Naive thymus-derived CD4-positive, alpha-beta T cell (primary cell): ENCODE measurements at regions of chr16 and their contacts with region 1.

Region 1: DNA sequence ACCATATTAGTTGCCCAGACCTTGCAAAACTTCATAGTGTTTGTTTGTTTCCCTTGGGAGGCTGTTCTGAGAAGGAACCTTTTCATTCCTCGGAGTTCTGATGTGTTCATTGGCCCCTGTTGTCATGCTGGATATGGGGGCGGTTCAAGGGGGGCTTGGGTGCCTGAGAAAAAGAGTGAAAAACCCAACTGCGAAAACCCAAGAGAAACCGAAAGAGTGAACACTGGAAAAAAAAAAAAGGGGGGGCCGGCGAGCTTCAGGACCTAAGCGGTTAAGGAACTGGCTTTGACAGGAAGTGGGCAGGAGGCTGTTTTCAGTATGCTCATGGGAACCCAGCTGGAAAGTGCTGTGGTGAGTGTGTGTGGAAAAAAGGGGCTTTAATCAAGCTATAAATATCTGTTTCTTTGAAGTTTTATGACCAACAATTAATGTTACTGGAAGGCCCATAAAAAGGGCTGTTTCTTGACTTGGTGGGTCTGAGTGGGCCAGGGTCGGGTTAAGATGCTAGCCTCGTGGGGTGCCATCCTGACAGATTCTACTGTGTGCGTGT is 510.7 kb downstream of the MAF start:
- DNase-seq: peak in 8 of 9 donors; percentile 14 to 67 (median 36)
- ATAC-seq: peak; percentile 52
- H3K4me3 ChIP-seq: peak overlapping the region; percentile 7
- H3K4me3 Mint-ChIP-seq: peak overlapping the region; percentile 76 to 85 (median 82)
- H3K27ac ChIP-seq: no peak overlapping the region
- H3K27ac Mint-ChIP-seq: peak overlapping the region; percentile 48 to 85 (median 80)
- H3K4me1 ChIP-seq: peaks cover 40 to 46% of the 10 kb centered on the region in 2 donors
- H3K4me1 Mint-ChIP-seq: peaks cover 35 to 69% (median 57%) of the 10 kb centered on the region in 7 donors
- H3K27me3 ChIP-seq: no peaks in the 10 kb centered on the region
- H3K27me3 Mint-ChIP-seq: peaks cover 0 to 6% (median 0%) of the 10 kb centered on the region in 5 donors

Region 2: GRCh38 chr16:78778101-78779004 is 311.5 kb before region 1 on chr16:
- CTCF ChIA-PET with region 1: no interaction called
- POLR2A ChIA-PET with region 1: no interaction called
- intact Hi-C with region 1: loop called in 1 of 2 experiments (anchors 1 kb)
- DNase-seq: peak in 1 of 9 donors; percentile 55
- ATAC-seq: no peak
- H3K4me3 ChIP-seq: no peak overlapping the region
- H3K4me3 Mint-ChIP-seq: peak overlapping the region in 1 of 10 donors; percentile 76
- H3K27ac ChIP-seq: no peak overlapping the region
- H3K27ac Mint-ChIP-seq: peak overlapping the region in 1 of 9 donors; percentile 94
- H3K4me1 ChIP-seq: no peaks in the 10 kb centered on the region
- H3K4me1 Mint-ChIP-seq: peaks cover 0 to 52% (median 0%) of the 10 kb centered on the region in 7 donors
- H3K27me3 ChIP-seq: no peaks in the 10 kb centered on the region
- H3K27me3 Mint-ChIP-seq: no peaks in the 10 kb centered on the region

Region 3: GRCh38 chr16:79071424-79071823 is 18.4 kb before region 1 on chr16:
- CTCF ChIA-PET with region 1: no interaction called
- POLR2A ChIA-PET with region 1: no interaction called
- intact Hi-C with region 1: loop called in 1 of 2 experiments (anchors 2 kb)
- DNase-seq: no peak
- ATAC-seq: no peak
- H3K4me3 ChIP-seq: no peak overlapping the region
- H3K4me3 Mint-ChIP-seq: no peak overlapping the region
- H3K27ac ChIP-seq: no peak overlapping the region
- H3K27ac Mint-ChIP-seq: no peak overlapping the region
- H3K4me1 ChIP-seq: no peaks in the 10 kb centered on the region
- H3K4me1 Mint-ChIP-seq: peaks cover 14 to 53% (median 44%) of the 10 kb centered on the region in 7 donors
- H3K27me3 ChIP-seq: no peaks in the 10 kb centered on the region
- H3K27me3 Mint-ChIP-seq: peaks cover 0 to 11% (median 1%) of the 10 kb centered on the region in 5 donors

Region 4: DNA sequence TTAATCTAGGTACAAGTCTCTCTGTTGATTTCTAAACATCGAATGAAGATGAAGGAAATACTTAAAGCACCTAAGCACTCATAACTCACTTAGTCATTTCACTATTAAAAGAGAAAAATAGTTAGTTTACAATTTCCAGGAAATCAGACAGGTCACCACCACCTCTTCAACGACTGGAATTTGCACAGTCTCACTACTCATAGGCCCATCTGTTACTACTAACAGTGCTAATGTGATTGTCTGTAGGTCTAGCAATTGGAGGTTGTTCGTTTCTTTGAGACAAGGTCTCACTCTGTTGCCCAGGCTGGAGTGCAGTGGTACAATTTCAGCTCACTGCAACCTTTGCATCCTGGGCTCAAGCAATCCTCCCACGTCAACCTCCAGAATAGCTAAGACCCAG is 66.1 kb after region 1 on chr16:
- CTCF ChIA-PET with region 1: interaction called, 3 read pairs
- POLR2A ChIA-PET with region 1: no interaction called
- intact Hi-C with region 1: loop called in 1 of 2 experiments (anchors 2 kb)
- DNase-seq: no peak
- ATAC-seq: no peak
- H3K4me3 ChIP-seq: no peak overlapping the region
- H3K4me3 Mint-ChIP-seq: no peak overlapping the region
- H3K27ac ChIP-seq: no peak overlapping the region
- H3K27ac Mint-ChIP-seq: no peak overlapping the region
- H3K4me1 ChIP-seq: no peaks in the 10 kb centered on the region
- H3K4me1 Mint-ChIP-seq: peaks cover 0 to 25% (median 13%) of the 10 kb centered on the region in 7 donors
- H3K27me3 ChIP-seq: no peaks in the 10 kb centered on the region
- H3K27me3 Mint-ChIP-seq: no peaks in the 10 kb centered on the region

Region 5: DNA sequence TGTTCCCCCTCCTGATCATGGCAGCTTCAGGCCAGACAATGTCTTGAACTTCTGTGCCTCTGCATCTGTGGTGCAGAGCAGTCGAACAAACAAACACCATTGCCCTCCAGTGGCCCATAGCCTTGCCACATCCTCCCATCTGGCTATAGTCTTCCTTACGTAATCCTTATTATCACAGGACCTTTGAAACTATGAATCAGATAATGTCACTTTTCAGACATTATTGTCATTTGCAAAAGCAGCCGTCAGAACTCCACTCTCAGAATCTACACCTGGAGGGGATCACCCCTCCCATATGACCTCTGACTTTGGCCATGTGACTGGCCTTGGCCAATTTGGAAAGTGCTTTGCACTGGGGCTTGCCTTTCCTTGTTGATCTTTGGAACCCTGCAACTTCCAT is 123.4 kb after region 1 on chr16:
- CTCF ChIA-PET with region 1: no interaction called
- POLR2A ChIA-PET with region 1: no interaction called
- intact Hi-C with region 1: loop called in 1 of 2 experiments (anchors 5 kb)
- DNase-seq: no peak
- ATAC-seq: no peak
- H3K4me3 ChIP-seq: no peak overlapping the region
- H3K4me3 Mint-ChIP-seq: no peak overlapping the region
- H3K27ac ChIP-seq: no peak overlapping the region
- H3K27ac Mint-ChIP-seq: no peak overlapping the region
- H3K4me1 ChIP-seq: peaks cover 3 to 13% of the 10 kb centered on the region in 2 donors
- H3K4me1 Mint-ChIP-seq: peaks cover 2 to 19% (median 10%) of the 10 kb centered on the region in 7 donors
- H3K27me3 ChIP-seq: no peaks in the 10 kb centered on the region
- H3K27me3 Mint-ChIP-seq: no peaks in the 10 kb centered on the region

Region 6: DNA sequence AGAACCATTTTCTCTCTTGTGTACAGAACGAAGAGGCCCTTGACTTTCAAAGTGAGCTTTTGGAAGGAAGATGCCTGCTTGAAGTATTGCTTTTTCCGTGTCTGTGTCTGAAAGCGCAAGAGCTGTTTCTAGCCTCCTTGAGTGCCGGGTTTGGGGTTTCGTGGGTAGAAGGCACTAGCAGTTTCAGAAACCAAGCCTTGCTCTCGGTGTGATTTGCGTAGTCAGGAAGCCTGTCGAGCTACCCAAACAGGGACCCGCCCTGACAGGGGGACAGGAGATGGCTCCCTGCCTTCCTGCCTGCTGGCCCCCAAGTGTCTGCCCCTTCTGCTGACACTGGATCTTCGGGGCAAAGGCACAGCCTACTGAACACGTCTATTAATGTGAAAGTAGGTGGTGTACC is 188.7 kb after region 1 on chr16:
- CTCF ChIA-PET with region 1: no interaction called
- POLR2A ChIA-PET with region 1: no interaction called
- intact Hi-C with region 1: no loop called
- DNase-seq: peak in 8 of 9 donors; percentile 14 to 64 (median 44)
- ATAC-seq: peak; percentile 85
- H3K4me3 ChIP-seq: peak overlapping the region; percentile 22
- H3K4me3 Mint-ChIP-seq: peak overlapping the region; percentile 5 to 74 (median 55)
- H3K27ac ChIP-seq: no peak overlapping the region
- H3K27ac Mint-ChIP-seq: peak overlapping the region in 8 of 9 donors; percentile 10 to 91 (median 63)
- H3K4me1 ChIP-seq: peaks cover 16 to 53% of the 10 kb centered on the region in 2 donors
- H3K4me1 Mint-ChIP-seq: peaks cover 16 to 83% (median 34%) of the 10 kb centered on the region in 7 donors
- H3K27me3 ChIP-seq: no peaks in the 10 kb centered on the region
- H3K27me3 Mint-ChIP-seq: peaks cover 0 to 26% (median 4%) of the 10 kb centered on the region in 5 donors

Region 7: DNA sequence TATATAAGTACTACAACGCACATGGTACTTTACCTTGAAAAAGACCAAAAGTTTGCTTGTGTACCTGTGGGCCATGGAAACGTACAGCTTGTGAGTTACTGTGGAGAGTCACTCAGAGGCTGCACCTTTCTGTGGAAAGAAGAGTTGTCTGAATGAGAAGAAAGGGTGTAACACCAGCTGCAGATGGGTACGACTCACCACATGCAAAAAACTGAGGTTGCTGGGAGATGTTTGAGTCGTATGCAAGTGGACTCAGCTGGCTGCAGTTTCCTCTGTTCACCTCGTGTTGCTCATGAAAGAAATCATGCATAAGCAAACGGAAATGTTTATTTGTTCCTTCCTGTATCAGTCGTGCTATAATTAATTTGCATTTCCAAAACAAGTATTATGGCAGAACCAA is 1428.6 kb after region 1 on chr16:
- CTCF ChIA-PET with region 1: no interaction called
- POLR2A ChIA-PET with region 1: no interaction called
- intact Hi-C with region 1: loop called in 1 of 2 experiments (anchors 5 kb)
- DNase-seq: peak in 7 of 9 donors; percentile 17 to 54 (median 34)
- ATAC-seq: peak; percentile 61
- H3K4me3 ChIP-seq: no peak overlapping the region
- H3K4me3 Mint-ChIP-seq: peak overlapping the region in 8 of 10 donors; percentile 44 to 82 (median 57)
- H3K27ac ChIP-seq: no peak overlapping the region
- H3K27ac Mint-ChIP-seq: peak overlapping the region in 4 of 9 donors; percentile 14 to 53 (median 28)
- H3K4me1 ChIP-seq: peaks cover 14 to 17% of the 10 kb centered on the region in 2 donors
- H3K4me1 Mint-ChIP-seq: peaks cover 13 to 20% (median 16%) of the 10 kb centered on the region in 7 donors
- H3K27me3 ChIP-seq: no peaks in the 10 kb centered on the region
- H3K27me3 Mint-ChIP-seq: peaks cover 0 to 34% (median 0%) of the 10 kb centered on the region in 5 donors